Endothelial cell of umbilical vein (primary cell): ENCODE measurements at regions of chr6 and their contacts with region 1.

Region 1: GRCh38 chr6:25717866-25718740 is 36.4 kb upstream of the SLC17A4 start:
- DNase-seq: peak; percentile 48
- H3K4me3 ChIP-seq: no peak overlapping the region
- H3K27ac ChIP-seq: no peak overlapping the region
- H3K4me1 ChIP-seq: peaks cover 23% of the 10 kb centered on the region
- H3K27me3 ChIP-seq: no peaks in the 10 kb centered on the region
- CTCF ChIP-seq: peak; percentile 35 to 42
- POLR2A ChIP-seq: no peak

Region 2: DNA sequence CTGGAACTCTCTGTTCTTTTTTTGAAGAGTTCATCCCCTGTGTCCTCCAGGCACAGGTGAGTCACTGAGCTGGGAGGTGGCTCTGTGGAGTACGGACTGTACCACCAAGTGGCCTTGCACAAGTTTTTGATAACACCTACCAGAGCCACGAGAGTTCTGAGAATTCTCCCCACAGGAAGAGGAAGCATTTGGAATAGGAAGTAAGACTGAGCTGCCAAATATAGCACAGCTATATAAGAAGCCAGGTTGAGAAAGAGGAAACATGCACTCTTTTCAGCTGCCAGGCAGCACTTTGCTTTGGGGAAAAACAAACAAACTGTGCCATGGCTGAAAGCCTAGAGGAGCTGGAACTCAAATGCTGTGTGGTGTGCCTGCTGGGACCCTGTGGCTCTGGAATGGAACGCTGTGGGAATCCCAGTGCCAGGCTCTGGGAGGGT is 711.5 kb before region 1 on chr6:
- CTCF ChIA-PET with region 1: no interaction called
- POLR2A ChIA-PET with region 1: no interaction called
- dilution Hi-C with region 1: no loop called
- intact Hi-C with region 1: no loop called
- DNase-seq: peak; percentile 68
- H3K4me3 ChIP-seq: no peak overlapping the region
- H3K27ac ChIP-seq: peak overlapping the region; percentile 19
- H3K4me1 ChIP-seq: peaks cover 33% of the 10 kb centered on the region
- H3K27me3 ChIP-seq: no peaks in the 10 kb centered on the region
- CTCF ChIP-seq: no peak
- POLR2A ChIP-seq: no peak

Region 3: GRCh38 chr6:25278914-25279747 is 439.0 kb before region 1 on chr6 and contains the start of gene CARMIL1:
- CTCF ChIA-PET with region 1: interaction called, 4 read pairs
- POLR2A ChIA-PET with region 1: no interaction called
- dilution Hi-C with region 1: no loop called
- intact Hi-C with region 1: loop called (anchors 10 kb)
- DNase-seq: peak; percentile 70
- H3K4me3 ChIP-seq: peak within 1 kb of the TSS; percentile 74 to 90 (median 87)
- H3K27ac ChIP-seq: peak within 1 kb of the TSS; percentile 18
- H3K4me1 ChIP-seq: peaks cover 10% of the 10 kb centered on the region
- H3K27me3 ChIP-seq: no peaks in the 10 kb centered on the region
- CTCF ChIP-seq: peak; percentile 50 to 84
- POLR2A ChIP-seq: no peak
- total RNA-seq, gene CARMIL1: 8.7 and 8.8 TPM in 2 replicates

Region 4: GRCh38 chr6:25608558-25609174 is 109.4 kb before region 1 on chr6:
- CTCF ChIA-PET with region 1: interaction called, 16 read pairs
- POLR2A ChIA-PET with region 1: no interaction called
- dilution Hi-C with region 1: no loop called
- intact Hi-C with region 1: loop called (anchors 2 kb)
- DNase-seq: no peak
- H3K4me3 ChIP-seq: no peak overlapping the region
- H3K27ac ChIP-seq: no peak overlapping the region
- H3K4me1 ChIP-seq: no peaks in the 10 kb centered on the region
- H3K27me3 ChIP-seq: no peaks in the 10 kb centered on the region
- CTCF ChIP-seq: no peak
- POLR2A ChIP-seq: no peak

Region 5: GRCh38 chr6:25681862-25682261 is 36.2 kb before region 1 on chr6:
- CTCF ChIA-PET with region 1: interaction called, 11 read pairs
- POLR2A ChIA-PET with region 1: no interaction called
- dilution Hi-C with region 1: no loop called
- intact Hi-C with region 1: no loop called
- DNase-seq: no peak
- H3K4me3 ChIP-seq: no peak overlapping the region
- H3K27ac ChIP-seq: no peak overlapping the region
- H3K4me1 ChIP-seq: no peaks in the 10 kb centered on the region
- H3K27me3 ChIP-seq: no peaks in the 10 kb centered on the region
- CTCF ChIP-seq: no peak
- POLR2A ChIP-seq: no peak

Region 6: GRCh38 chr6:25706314-25707014 is 11.6 kb before region 1 on chr6:
- CTCF ChIA-PET with region 1: interaction called, 39 read pairs
- POLR2A ChIA-PET with region 1: no interaction called
- dilution Hi-C with region 1: no loop called
- intact Hi-C with region 1: no loop called
- DNase-seq: no peak
- H3K4me3 ChIP-seq: no peak overlapping the region
- H3K27ac ChIP-seq: no peak overlapping the region
- H3K4me1 ChIP-seq: no peaks in the 10 kb centered on the region
- H3K27me3 ChIP-seq: peaks cover 0 to 4% of the 10 kb centered on the region in 2 experiments
- CTCF ChIP-seq: no peak
- POLR2A ChIP-seq: no peak

Region 7: GRCh38 chr6:25743868-25744267 is 25.8 kb after region 1 on chr6:
- CTCF ChIA-PET with region 1: no interaction called
- POLR2A ChIA-PET with region 1: no interaction called
- dilution Hi-C with region 1: no loop called
- intact Hi-C with region 1: no loop called
- DNase-seq: no peak
- H3K4me3 ChIP-seq: no peak overlapping the region
- H3K27ac ChIP-seq: no peak overlapping the region
- H3K4me1 ChIP-seq: no peaks in the 10 kb centered on the region
- H3K27me3 ChIP-seq: no peaks in the 10 kb centered on the region
- CTCF ChIP-seq: no peak
- POLR2A ChIP-seq: no peak

Region 8: DNA sequence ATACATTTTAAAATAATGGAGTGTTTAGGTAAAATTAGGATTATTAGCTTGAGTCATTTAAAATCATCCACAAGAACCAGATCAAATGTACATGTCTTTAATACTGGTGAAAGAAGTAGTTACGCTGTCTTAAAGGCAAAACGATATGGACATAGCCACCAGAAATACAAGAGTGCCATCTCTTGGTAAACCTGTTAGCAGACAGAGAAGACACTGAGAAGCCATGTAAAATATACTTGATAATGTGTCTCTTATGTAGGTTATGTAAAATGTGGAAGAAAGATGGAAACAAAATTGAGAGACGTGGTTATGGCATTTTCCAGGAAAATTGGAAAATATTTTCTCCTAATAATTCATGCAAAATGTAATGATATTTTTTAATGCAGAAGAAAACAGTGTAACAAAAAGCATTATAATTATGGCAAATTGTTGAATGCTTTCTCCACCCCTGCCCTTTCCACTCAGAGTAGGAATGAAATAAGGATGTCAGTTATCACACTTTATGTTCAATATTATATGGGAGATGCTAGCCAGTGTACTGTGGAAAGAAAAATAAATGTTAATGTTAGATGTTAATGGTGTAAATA is 224.6 kb after region 1 on chr6:
- CTCF ChIA-PET with region 1: interaction called, 7 read pairs
- POLR2A ChIA-PET with region 1: no interaction called
- dilution Hi-C with region 1: no loop called
- intact Hi-C with region 1: loop called (anchors 5 kb)
- DNase-seq: peak; percentile 50
- H3K4me3 ChIP-seq: no peak overlapping the region
- H3K27ac ChIP-seq: no peak overlapping the region
- H3K4me1 ChIP-seq: no peaks in the 10 kb centered on the region
- H3K27me3 ChIP-seq: no peaks in the 10 kb centered on the region
- CTCF ChIP-seq: peak; percentile 10 to 17
- POLR2A ChIP-seq: no peak